Activated CD4-positive, alpha-beta T cell treated with anti-CD3 and anti-CD28 coated beads, Interleukin-2, amount 10 ng/mL, durations not matched to agents 24 days and 14 days (primary cell): ENCODE measurements at regions of chr7 and their contacts with region 1.

Region 1: DNA sequence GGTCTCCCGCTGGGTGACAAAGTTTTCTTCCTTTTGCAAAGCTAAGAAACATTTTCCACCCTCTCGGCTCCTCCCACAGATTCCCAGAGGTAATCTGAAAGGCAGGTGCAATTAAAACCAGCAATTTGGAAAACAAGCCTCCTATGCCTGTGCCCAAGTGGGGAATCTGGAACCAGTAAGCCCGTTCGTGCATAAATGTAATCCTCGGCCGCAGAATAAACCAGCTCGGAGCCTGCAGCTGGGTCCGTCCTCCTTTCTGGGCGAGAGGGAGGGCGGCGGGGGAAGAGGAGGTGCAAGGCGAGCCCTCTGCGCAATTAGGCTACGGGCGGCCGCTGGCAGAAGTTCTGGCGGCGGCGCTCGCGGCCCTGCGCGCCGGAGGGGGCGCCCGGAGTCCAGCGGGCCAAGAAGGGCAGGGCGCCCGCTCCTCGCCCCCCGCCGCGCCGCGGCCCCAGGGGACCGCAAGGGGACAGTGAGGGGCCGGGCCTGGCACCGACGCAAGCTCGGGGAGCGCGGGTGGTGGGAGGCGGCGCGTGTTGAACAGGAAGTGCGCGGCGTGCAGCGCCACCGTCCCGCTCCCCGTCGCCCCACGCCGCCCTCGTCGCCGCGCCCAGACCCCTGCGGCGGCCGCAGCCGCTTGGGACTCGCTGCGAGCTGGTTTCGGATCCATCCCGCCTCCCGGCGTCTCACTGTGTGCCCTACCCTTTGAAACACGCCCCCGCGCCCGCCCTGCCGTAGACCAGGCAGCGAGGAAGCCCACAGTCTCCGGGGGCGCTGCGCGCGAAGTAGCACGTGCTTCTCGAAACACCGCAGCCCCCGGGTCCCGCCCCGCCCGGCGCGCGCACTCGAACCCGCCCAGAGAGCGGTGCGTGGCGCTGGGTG is at the start of gene PRKAG2:
- DNase-seq: peak; percentile 86
- H3K4me3 Mint-ChIP-seq: peak within 1 kb of the TSS; percentile 94
- H3K27ac Mint-ChIP-seq: peak within 1 kb of the TSS; percentile 88
- H3K4me1 Mint-ChIP-seq: peaks cover 6% of the 10 kb centered on the region
- H3K27me3 Mint-ChIP-seq: peaks cover 33% of the 10 kb centered on the region
- total RNA-seq, gene PRKAG2: 14.3 and 15.5 TPM in 2 replicates

Region 2: GRCh38 chr7:151631968-151632749 is 245.0 kb before region 1 on chr7:
- intact Hi-C with region 1: loop called (anchors 5 kb)
- DNase-seq: peak; percentile 97
- H3K4me3 Mint-ChIP-seq: peak overlapping the region; percentile 96
- H3K27ac Mint-ChIP-seq: peak overlapping the region; percentile 99
- H3K4me1 Mint-ChIP-seq: peaks cover 24% of the 10 kb centered on the region
- H3K27me3 Mint-ChIP-seq: peaks cover 2% of the 10 kb centered on the region

Region 3: DNA sequence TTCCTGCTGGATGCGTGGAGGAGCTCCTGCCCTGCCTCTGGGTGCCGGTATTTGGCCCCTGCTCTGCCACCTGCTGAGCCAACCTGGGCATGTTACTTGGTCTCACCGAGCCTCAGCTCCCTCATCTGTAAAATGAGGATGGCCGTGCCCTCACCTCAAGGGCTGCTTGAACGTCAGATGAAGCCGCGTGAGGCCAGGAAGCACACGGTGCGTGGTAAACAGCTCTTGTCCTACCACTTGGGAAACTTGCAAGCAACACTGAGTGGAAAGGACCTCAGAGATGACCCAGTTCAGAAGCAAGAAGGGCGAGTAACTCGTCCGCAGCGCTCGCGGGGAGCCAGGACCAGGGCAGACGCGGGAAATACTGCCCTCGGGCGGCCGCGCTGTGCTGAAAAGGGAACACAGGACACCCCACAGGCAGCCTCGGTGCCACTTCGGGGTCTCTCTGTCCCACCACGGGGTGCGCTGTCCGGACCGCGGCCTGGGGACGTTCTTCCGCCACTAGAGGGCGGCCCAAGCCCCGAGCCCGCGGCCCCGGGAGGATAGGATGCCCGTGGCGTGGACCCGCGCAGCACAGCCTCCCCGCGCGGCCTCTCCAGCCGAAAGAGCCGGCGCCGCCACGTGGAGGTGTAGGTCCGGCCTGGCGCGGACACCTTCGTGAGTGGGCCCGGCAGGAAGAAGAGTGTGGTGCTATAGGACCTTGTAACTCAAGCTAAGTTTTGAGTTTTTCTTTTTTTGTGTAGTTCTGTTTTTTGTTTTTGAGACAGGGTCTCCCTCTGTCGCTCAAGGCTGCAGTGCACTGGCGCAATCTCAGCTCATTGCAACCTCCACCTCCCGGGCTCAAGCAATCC is 94.3 kb before region 1 on chr7:
- intact Hi-C with region 1: loop called (anchors 2 kb)
- DNase-seq: peak; percentile 89
- H3K4me3 Mint-ChIP-seq: peak overlapping the region; percentile 80
- H3K27ac Mint-ChIP-seq: peak overlapping the region; percentile 86
- H3K4me1 Mint-ChIP-seq: peaks cover 7% of the 10 kb centered on the region
- H3K27me3 Mint-ChIP-seq: no peaks in the 10 kb centered on the region

Region 4: DNA sequence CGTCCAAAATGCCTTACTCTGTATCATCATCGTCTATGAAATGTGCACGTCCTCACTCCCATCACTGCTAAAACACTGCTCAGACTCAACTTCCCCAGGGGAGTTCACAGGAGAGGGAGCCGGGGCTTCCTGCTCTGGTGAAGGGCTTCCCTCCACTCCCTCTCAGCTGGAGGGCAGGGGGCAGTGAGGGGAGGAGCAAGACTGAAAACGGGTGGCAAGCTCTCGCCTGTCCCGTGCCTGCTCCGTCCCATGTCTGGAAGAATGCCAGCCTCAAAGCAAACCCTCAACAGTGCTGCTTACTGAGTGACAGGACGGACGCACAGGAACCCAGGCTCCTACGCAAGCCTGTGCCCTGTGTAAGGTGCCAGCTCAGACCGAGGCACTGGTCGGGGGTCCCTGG is 25.4 kb before region 1 on chr7:
- intact Hi-C with region 1: no loop called
- DNase-seq: no peak
- H3K4me3 Mint-ChIP-seq: peak overlapping the region; percentile 59
- H3K27ac Mint-ChIP-seq: no peak overlapping the region
- H3K4me1 Mint-ChIP-seq: peaks cover 11% of the 10 kb centered on the region
- H3K27me3 Mint-ChIP-seq: peaks cover 4% of the 10 kb centered on the region

Region 5: DNA sequence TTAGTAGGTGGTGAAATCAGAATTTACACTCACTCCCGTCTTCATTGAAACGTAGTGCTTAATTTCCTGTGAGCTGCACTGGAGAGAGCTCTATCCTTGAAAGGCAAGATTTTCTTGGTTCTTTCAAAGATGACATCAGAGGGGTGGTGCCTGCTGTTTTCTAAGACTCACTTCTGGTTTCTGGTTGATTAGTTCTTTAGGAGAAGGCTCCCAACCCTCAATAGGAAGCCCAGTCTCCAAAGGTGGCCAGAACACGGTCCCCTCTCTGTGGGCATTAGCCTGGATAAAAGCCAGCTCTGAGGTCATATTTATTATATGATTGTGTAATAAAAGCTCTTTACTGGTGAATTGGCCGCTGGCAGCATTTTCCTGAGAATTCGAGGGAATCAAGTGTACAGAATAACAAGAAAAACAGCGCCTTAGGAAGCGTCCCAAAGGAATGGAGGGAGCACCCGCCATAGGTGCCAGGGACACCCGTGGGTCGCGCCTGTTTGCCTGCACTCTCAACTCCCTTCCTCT is 55.3 kb after region 1 on chr7:
- intact Hi-C with region 1: loop called (anchors 2 kb)
- DNase-seq: no peak
- H3K4me3 Mint-ChIP-seq: no peak overlapping the region
- H3K27ac Mint-ChIP-seq: no peak overlapping the region
- H3K4me1 Mint-ChIP-seq: peaks cover 18% of the 10 kb centered on the region
- H3K27me3 Mint-ChIP-seq: peaks cover 5% of the 10 kb centered on the region

Region 6: DNA sequence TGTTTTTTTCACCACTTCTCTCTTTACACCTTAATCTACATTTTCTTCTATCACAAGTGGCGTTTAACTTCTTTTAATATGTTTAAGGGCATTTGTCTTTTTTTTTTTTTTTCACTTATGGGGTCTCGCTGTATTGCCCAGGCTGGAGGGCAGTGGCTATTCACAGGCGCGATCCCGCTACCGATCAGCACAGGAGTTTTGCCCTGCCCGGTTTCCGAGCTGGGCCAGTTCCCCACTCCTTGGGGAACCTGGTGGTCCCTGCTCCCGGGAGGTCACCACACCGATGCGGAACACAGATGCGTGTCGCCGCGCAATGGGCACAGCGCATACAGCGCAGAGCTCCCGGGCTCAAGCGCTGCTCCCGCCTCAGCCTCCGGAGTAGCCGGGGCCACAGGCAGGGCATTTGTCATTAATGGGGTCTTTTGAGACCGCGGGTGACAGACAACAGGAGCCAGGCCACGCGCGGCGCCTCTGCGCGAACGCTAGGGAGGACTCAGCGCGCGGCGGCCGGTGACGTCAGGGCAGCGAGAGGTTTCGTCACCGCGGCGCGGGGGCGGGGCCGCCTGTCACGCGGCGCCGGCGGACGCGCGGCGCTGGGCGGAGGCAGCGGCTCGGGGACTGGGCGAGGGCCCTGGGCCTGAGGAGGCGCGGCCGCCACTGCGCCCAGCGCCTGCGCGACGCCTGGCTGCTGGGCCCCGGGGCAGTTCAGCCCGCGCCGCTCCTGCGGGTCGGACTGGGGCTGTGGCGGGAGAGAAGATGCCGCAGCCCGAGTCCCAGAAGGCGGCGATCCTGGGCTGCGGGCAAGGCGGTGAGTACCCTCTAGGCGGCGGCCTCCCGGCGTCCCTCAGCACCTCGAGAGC is 148.2 kb after region 1 on chr7 and contains the start of gene GALNT11:
- intact Hi-C with region 1: loop called (anchors 5 kb)
- DNase-seq: peak; percentile 97
- H3K4me3 Mint-ChIP-seq: peak within 1 kb of the TSS; percentile 88
- H3K27ac Mint-ChIP-seq: peak within 1 kb of the TSS; percentile 85
- H3K4me1 Mint-ChIP-seq: peaks cover 23% of the 10 kb centered on the region
- H3K27me3 Mint-ChIP-seq: peaks cover 16% of the 10 kb centered on the region
- total RNA-seq, gene GALNT11: 22.0 and 22.1 TPM in 2 replicates

Region 7: GRCh38 chr7:152145853-152146466 is 268.8 kb after region 1 on chr7:
- intact Hi-C with region 1: loop called (anchors 5 kb)
- DNase-seq: peak; percentile 76
- H3K4me3 Mint-ChIP-seq: peak overlapping the region; percentile 68
- H3K27ac Mint-ChIP-seq: peak overlapping the region; percentile 89
- H3K4me1 Mint-ChIP-seq: peaks cover 34% of the 10 kb centered on the region
- H3K27me3 Mint-ChIP-seq: no peaks in the 10 kb centered on the region